Activated T-helper 1 cell treated with anti-CD3 and anti-CD28 coated beads, Interleukin-12 subunit alpha, Interleukin-12 subunit beta, Interleukin-2, Interleukin-4 antibody, amounts not matched to agents 30 ng/mL and 10 ng/mL and 1 ng/mL, durations not matched to agents 14 hours and 24 hours and 36 hours (primary cell): ENCODE measurements at regions of chrX and their contacts with region 1.

Region 1: GRCh38 chrX:19372170-19372546 is 28.4 kb downstream of the PDHA1 start:
- DNase-seq: peak; percentile 34
- H3K4me3 Mint-ChIP-seq: peak overlapping the region; percentile 87
- H3K27ac Mint-ChIP-seq: peak overlapping the region; percentile 85
- H3K4me1 Mint-ChIP-seq: peaks cover 9% of the 10 kb centered on the region
- H3K27me3 Mint-ChIP-seq: peaks cover 2% of the 10 kb centered on the region

Region 2: DNA sequence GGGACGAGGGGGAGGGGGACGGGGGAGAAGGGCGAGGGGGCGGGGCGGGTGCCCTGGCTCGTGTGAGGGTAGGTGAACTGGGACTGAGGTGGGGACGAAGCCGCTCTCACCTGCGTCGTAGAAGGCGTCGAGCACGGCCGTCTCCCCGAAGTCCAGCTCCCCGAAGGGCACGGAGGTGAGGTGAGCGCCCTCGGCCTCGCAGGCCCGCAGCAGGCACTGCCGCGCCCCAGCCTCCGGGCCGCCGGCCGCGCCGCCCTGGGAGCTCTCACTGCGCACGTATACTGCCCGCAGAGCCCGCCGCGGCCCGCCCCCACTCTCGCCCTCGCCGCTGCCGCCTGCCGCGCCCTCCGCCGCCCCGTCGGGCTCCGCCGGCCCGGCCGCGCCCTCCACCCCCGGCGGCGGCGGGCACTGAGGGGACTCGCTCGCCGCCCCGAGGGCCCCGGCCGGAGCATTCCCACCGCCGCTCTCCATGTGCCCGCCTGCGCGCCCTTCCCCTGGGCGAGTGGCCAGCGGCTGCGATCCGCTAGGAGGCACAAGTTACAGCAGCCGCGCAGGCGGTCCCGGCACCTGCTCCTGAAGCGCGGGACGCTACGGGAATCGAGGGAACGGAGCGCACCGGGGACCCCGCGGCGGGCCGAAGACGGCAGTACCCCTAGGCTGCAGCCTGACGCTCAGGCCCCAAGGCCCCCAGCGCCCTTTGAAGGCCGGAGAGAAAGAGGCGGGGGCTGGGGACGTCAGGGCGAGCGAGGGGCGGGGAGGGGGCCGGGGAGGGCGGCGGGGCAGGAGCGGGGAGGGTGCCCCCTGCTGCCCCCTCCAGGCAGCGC is 142.8 kb after region 1 on chrX and contains the start of gene MAP3K15:
- intact Hi-C with region 1: loop called (anchors 5 kb)
- DNase-seq: no peak
- H3K4me3 Mint-ChIP-seq: peak within 1 kb of the TSS; percentile 51
- H3K27ac Mint-ChIP-seq: no peak within 1 kb of the TSS
- H3K4me1 Mint-ChIP-seq: no peaks in the 10 kb centered on the region
- H3K27me3 Mint-ChIP-seq: peaks cover 24% of the 10 kb centered on the region
- total RNA-seq, gene MAP3K15: 0.10 and 0.18 TPM in 2 replicates

Region 3: GRCh38 chrX:19535476-19535875 is 163.3 kb after region 1 on chrX:
- intact Hi-C with region 1: loop called (anchors 1 kb)
- DNase-seq: no peak
- H3K4me3 Mint-ChIP-seq: no peak overlapping the region
- H3K27ac Mint-ChIP-seq: no peak overlapping the region
- H3K4me1 Mint-ChIP-seq: no peaks in the 10 kb centered on the region
- H3K27me3 Mint-ChIP-seq: no peaks in the 10 kb centered on the region

Region 4: GRCh38 chrX:19904778-19905367 is 532.7 kb after region 1 on chrX:
- intact Hi-C with region 1: loop called (anchors 5 kb)
- DNase-seq: no peak
- H3K4me3 Mint-ChIP-seq: no peak overlapping the region
- H3K27ac Mint-ChIP-seq: no peak overlapping the region
- H3K4me1 Mint-ChIP-seq: peaks cover 19% of the 10 kb centered on the region
- H3K27me3 Mint-ChIP-seq: no peaks in the 10 kb centered on the region